K562 (cell line): ENCODE measurements at regions of chr5 and their contacts with region 1.

Region 1: GRCh38 chr5:522899-523440 is 1.3 kb downstream of the SLC9A3 start:
- DNase-seq: no peak
- ATAC-seq: peak; percentile 16; the same call in 1 of the 3 replicates
- H3K4me3 ChIP-seq: no peak overlapping the region
- H3K27ac ChIP-seq: no peak overlapping the region
- H3K4me1 ChIP-seq: peaks cover 0 to 25% of the 10 kb centered on the region in 2 experiments; a peak in 3 of 5 replicates
- H3K27me3 ChIP-seq: peaks cover 33 to 89% of the 10 kb centered on the region in 2 experiments; a peak in 3 of 5 replicates
- CTCF ChIP-seq: 0 out of 6 replicates have a peak, but pooled peaks of 1 of the 3 experiments have one; percentile 18
- EP300 ChIP-seq: no peak
- POLR2A ChIP-seq: no peak
- RAD21 ChIP-seq: no peak

Region 2: DNA sequence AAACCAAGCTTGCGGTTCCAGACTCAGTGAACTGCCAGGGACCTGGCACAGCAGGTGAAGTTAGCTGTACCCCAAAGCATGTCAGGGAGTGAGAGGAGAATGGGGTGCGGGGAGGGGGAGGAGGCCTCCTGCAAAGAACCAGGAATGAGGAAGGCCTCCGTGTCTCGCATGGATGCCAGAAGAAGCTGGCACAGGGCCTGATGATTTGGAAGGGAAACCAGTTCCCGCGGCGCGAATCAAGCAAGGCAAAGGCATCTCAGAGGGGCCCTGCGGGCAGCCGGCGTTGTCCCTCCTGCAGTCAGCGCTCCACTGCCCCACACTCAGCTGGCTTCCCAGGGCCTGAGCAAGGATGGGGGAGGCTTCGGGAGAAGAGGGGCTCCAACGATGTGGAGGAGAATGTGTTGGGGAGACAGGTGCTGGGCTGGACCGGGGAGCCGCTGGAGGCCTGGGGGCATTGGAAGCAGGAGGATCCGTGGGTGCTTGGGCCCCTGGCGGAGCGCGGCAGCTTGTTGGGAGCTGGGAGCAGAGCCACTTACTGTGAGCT is 13.3 kb before region 1 on chr5:
- CTCF ChIA-PET with region 1: no interaction called
- POLR2A ChIA-PET with region 1: interaction called, 10 read pairs
- in situ Hi-C with region 1: no loop called
- intact Hi-C with region 1: no loop called
- DNase-seq: no peak
- ATAC-seq: no peak
- H3K4me3 ChIP-seq: no peak overlapping the region
- H3K27ac ChIP-seq: no peak overlapping the region
- H3K4me1 ChIP-seq: peaks cover 0 to 35% of the 10 kb centered on the region in 2 experiments; a peak in 2 of 5 replicates
- H3K27me3 ChIP-seq: peaks cover 35 to 72% of the 10 kb centered on the region in 2 experiments; a peak in 4 of 5 replicates
- CTCF ChIP-seq: no peak
- EP300 ChIP-seq: no peak
- POLR2A ChIP-seq: no peak
- RAD21 ChIP-seq: no peak

Region 3: DNA sequence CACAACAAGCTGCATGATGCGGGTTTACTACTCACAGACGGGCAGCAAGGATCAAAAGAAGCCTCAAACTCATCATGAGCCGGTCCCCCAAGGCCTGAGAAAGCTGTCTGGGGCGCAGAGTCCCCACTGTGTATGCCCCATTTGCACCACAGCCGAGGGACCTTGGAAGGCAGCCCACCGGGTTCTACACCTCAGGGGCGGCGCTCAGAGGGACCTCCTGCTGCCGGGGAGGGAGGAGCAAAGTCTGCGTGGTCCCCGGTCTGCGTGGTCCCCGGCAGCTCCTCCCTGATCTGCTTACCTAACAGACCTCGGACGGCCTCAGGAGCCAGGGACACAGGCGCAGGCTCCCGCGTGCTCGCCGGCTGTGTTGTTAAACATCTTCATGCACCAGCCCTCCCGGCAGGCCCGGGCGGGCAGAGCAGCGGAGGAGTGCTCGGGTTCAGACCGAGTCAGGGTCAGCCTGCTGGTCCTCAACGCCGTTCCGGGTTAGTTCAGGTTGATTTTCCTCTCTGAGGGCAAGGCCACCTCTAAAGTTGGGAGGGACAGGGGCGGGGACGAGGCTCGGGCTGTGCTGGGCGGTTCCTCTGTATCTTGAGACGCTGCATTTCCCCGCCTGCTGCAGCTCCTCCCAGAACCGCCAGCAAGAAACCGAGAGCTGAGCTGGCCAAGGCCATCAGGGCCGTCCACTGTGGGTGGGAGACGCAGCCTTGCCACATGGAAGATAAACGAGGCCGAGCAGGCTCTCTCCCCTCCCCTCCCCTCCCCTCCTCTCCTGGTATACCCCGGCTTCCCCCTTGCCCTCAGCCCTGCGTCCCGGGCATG is 1202.1 kb after region 1 on chr5:
- CTCF ChIA-PET with region 1: no interaction called
- POLR2A ChIA-PET with region 1: no interaction called
- in situ Hi-C with region 1: no loop called
- intact Hi-C with region 1: no loop called
- DNase-seq: peak; percentile 62 to 77 (median 74)
- ATAC-seq: peak; percentile 88
- H3K4me3 ChIP-seq: no peak overlapping the region
- H3K27ac ChIP-seq: no peak overlapping the region
- H3K4me1 ChIP-seq: peaks cover 2 to 30% of the 10 kb centered on the region in 2 experiments; a peak in 3 of 5 replicates
- H3K27me3 ChIP-seq: peaks cover 50 to 69% of the 10 kb centered on the region in 2 experiments
- CTCF ChIP-seq: no peak
- EP300 ChIP-seq: no peak
- POLR2A ChIP-seq: no peak
- RAD21 ChIP-seq: no peak